Activated T-helper 1 cell treated with anti-CD3 and anti-CD28 coated beads, Interleukin-12 subunit alpha, Interleukin-12 subunit beta, Interleukin-2, Interleukin-4 antibody, amounts not matched to agents 30 ng/mL and 10 ng/mL and 1 ng/mL, durations not matched to agents 14 hours and 24 hours and 36 hours (primary cell): ENCODE measurements at regions of chr11 and their contacts with region 1.

Region 1: DNA sequence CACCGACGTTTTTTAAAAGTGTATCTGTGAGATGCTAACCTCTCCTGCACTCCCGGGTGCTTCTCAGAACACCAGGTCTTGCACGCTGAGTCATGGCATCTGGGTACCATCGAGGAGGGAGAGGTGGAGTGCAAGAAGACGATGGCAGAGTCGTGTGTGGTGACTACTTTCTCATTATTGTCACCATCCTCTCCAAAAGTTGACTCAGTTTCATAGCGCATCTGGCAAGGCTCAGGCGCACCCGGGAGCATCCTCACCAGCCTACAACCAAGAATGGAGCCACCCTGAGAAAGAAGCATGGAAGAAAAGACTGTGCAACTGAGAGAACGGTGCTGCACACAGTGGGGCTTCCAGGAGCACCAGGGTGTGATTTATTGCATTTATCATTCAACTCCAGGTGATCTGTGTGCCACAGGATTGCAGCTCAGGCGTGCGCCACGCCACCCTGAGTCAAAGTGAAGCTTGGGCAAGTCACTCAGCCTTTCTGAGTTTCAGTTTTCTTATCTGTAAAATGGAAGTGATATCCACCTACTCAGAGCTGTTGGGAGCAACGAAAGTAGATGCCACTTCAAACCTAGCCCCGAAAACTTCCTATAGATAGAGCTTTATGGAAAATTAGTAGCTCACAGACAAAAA is 65.4 kb downstream of the LINC01488 start:
- DNase-seq: no peak
- H3K4me3 Mint-ChIP-seq: no peak overlapping the region
- H3K27ac Mint-ChIP-seq: no peak overlapping the region
- H3K4me1 Mint-ChIP-seq: peaks cover 10% of the 10 kb centered on the region
- H3K27me3 Mint-ChIP-seq: peaks cover 9% of the 10 kb centered on the region

Region 2: DNA sequence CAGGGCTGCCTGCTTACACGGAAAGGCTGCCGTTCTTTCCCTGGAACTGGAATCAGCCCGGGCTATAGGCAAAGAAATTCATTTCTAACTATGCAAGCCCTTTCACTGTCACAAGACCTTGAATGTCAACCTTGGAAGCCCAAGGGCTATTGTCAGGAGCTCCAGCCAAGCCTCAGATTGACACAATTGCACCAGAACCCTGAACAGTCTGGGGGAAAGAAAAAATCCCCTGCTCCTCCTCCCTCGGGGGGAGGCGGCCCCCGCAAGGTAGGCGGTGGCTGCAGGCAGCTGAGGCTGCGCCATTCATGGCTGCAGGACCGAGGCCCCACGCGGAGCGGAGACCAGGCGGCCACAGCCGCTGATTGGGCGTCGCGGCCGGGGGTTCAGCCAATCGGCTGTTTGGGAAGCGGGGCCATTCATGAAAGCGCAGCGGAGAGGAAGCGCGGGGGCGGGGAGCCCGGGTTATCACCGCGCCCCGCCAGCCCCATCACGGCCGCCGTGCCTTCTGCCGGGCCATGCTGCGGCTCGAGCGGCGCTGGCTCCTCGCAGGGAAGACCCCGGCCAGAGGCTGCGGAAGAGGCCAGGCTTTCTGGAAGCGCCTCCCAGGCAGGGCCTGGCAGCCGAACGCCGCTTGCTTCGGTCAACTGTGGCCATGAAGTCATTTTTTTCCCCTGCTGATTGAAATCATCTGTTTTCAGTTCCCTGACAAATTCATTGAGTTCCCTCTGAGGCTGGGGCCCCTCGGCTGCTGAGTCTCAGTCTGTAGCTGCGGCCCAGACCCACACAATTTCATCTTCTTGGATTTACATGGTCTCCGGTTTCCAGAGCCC is 103.5 kb before region 1 on chr11:
- intact Hi-C with region 1: loop called (anchors 2 kb)
- DNase-seq: peak; percentile 71
- H3K4me3 Mint-ChIP-seq: peak overlapping the region; percentile 63
- H3K27ac Mint-ChIP-seq: peak overlapping the region; percentile 52
- H3K4me1 Mint-ChIP-seq: peaks cover 7% of the 10 kb centered on the region
- H3K27me3 Mint-ChIP-seq: peaks cover 4% of the 10 kb centered on the region

Region 3: DNA sequence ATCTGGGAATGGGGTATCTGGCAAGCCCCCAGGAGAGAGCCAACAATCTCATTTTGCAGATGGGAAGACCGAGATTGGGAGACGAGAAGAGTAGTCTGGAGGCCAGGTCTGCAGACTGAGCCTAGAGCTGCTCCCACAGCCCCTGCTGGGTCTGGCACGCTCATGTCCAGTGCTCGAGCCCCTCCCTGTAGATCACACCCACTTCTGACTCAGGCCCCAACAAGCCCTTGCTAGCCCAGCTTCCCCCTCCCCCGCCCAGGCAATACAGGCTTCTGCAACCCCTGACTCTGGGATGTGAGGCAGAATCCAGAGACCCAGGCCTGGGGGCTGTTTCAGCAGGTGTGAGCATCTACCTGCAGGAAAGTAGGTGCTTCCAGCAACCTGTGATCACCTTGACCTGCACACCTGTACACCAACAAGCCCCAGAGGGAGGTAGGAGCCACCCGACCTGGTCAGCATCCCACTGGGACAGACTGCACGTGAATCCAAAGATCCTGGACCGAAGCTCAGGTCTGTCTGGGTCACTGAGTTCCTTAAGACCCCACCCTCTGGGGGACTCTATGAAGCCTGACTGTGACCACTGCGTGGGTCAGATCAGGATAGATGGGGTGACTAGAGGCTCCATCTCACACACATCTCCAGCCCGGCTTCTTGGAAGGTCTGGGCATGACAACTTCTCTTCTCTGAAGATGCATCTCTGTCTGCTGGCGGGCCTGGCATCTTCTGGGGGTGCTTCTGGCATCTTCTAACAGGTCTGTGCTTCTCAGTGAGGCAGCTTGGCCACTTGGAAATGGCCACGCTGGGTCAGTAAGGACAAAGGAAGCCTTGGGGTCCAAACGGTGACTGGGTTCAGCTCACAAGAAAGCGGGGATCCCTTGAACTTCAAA is 36.1 kb before region 1 on chr11:
- intact Hi-C with region 1: no loop called
- DNase-seq: no peak
- H3K4me3 Mint-ChIP-seq: no peak overlapping the region
- H3K27ac Mint-ChIP-seq: no peak overlapping the region
- H3K4me1 Mint-ChIP-seq: peaks cover 5% of the 10 kb centered on the region
- H3K27me3 Mint-ChIP-seq: peaks cover 3% of the 10 kb centered on the region